Calu3 (cell line): ENCODE measurements at regions of chr4 and their contacts with region 1.

Region 1: DNA sequence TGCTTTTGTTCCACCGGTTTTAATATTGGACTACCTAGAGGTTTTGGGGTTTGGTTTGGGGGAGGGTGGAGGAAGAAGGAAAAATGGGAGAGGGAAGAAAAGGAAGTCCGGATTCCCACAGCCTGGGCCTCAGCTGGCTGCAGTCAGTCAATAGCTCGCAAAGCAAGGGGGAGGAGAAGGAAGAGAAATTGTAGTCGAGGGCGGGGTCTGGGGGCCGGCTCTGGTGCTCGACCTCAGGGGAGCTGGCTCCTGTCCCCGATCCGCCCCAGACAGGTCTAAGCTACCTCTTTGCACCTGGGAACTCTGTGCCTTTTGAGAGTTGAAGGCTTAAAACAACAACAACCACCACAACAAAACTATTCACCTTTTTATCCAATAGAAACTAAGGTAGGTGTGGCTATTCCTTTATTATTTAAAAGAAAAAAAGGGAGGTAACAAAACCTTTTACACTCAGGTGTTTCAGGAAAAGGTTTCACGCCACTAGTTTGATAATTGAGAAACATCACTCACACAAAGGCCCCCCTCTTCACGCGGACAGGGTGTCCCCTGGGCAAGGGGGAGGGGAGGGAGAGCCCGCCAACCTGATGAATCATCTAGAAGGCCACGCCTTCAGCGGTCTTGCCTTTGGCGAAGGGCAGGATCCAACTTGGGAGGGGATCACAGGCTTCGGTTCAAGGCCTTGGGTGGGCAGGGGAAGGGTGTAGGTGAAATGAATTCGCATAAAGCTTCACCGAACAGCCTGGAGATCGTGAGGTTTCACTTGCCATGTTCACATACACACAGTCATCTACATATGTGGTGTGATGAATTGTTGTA is 1.6 kb upstream of the LNX1 start:
- DNase-seq: peak; percentile 66
- H3K4me3 Mint-ChIP-seq: peak overlapping the region; percentile 72
- H3K27ac Mint-ChIP-seq: peak overlapping the region; percentile 73
- H3K4me1 Mint-ChIP-seq: peaks cover 39% of the 10 kb centered on the region
- H3K27me3 Mint-ChIP-seq: no peaks in the 10 kb centered on the region
- CTCF ChIP-seq: no peak

Region 2: DNA sequence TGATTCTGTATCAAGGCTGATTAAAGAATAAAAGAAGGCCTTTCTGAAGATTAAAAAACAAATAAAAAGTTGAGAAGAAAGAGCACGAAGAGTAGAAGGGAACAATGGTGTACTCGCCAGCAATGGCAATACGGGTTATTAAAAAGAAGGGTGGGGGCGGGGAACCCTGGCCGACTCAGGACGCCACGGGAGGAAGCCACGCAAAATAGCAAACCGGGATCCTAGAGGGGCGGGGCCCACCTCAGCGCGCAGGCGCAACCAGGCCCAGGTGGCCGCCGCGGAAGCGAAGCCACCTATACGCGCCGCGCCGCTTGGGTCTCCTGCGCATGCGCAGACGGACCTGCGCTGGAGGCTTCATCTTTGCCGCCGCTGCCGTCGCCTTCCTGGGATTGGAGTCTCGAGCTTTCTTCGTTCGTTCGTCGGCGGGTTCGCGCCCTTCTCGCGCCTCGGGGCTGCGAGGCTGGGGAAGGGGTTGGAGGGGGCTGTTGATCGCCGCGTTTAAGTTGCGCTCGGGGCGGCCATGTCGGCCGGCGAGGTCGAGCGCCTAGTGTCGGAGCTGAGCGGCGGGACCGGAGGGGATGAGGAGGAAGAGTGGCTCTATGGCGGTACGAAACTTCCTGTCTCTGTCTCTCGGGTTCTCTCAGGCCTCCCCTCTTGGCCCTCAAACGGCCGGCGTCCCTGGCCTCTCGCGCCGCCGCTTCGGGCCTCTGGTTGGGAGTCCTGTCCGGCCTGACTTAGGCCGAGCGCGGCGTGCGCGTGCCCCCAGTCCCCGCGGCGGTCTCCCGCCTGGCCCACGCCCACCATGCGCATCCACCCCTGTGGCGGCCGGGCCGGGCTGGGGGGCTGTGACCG is 215.3 kb before region 1 on chr4 and contains the start of gene FIP1L1:
- CTCF ChIA-PET with region 1: no interaction called
- intact Hi-C with region 1: loop called (anchors 5 kb)
- DNase-seq: peak; percentile 92
- H3K4me3 Mint-ChIP-seq: peak within 1 kb of the TSS; percentile 94
- H3K27ac Mint-ChIP-seq: peak within 1 kb of the TSS; percentile 88
- H3K4me1 Mint-ChIP-seq: peaks cover 13% of the 10 kb centered on the region
- H3K27me3 Mint-ChIP-seq: no peaks in the 10 kb centered on the region
- CTCF ChIP-seq: no peak
- total RNA-seq, gene FIP1L1: 45.7 and 56.3 TPM in 2 replicates

Region 3: DNA sequence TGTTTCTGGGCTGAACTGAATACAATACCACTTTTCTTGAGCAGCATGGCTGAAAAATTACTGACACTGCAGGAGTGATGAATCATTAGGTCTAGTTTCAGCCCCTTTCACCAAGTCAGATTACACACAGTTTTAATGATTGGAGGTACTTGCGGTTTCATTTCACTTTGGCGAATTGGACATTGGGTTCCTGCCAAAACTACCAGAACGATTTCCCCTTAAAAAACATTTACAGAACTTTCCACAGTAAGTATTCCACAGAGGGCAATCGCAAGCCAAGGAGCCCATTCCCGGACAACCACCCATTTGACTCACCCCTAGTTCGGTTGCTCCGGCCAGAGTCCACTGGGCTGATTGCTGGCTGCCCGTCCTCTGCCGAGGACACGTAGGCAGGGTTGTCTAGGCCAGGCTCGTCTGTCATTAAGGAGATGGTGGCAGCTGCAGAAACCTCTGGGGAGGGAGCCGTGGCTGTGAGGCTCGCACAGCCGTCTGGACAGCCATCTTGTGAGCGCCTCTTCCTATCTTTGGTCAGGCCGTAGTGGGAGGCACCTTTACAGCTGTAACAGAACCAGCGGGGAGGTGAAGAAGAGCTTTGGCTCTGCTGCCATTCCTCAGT is 85.1 kb before region 1 on chr4:
- CTCF ChIA-PET with region 1: no interaction called
- intact Hi-C with region 1: loop called (anchors 5 kb)
- DNase-seq: peak; percentile 37
- H3K4me3 Mint-ChIP-seq: peak overlapping the region; percentile 78
- H3K27ac Mint-ChIP-seq: peak overlapping the region; percentile 72
- H3K4me1 Mint-ChIP-seq: no peaks in the 10 kb centered on the region
- H3K27me3 Mint-ChIP-seq: no peaks in the 10 kb centered on the region
- CTCF ChIP-seq: no peak

Region 4: GRCh38 chr4:53573696-53574095 is 19.2 kb before region 1 on chr4:
- CTCF ChIA-PET with region 1: no interaction called
- intact Hi-C with region 1: no loop called
- DNase-seq: no peak
- H3K4me3 Mint-ChIP-seq: no peak overlapping the region
- H3K27ac Mint-ChIP-seq: no peak overlapping the region
- H3K4me1 Mint-ChIP-seq: peaks cover 9% of the 10 kb centered on the region
- H3K27me3 Mint-ChIP-seq: no peaks in the 10 kb centered on the region
- CTCF ChIP-seq: no peak

Region 5: DNA sequence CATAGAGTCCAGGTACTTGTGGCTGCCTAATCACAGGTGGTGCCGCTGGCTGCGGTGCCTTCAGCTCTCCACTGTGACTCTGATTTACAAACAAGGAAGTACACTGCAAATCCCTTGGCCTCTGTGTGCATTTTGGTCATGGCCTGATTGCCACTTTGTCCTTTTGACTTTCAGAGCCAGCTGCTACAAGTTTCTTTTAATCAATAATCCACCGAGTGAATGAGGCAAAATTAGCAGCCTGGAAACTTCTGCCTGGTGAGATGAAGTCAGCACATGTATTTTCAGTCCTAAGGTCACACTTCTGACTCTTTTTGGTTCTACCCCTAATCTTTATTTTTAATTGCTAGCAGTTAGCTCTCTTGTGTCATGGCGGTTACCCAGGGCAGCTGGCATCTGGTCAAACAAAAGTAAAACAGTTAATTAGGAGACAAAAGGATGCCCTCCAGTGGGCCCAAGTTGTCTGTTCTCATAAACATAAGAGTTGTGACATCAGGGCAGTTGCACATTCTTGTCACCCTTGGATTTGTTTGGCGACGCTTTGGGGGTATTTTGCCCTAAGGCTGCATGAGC is 60.7 kb after region 1 on chr4:
- CTCF ChIA-PET with region 1: interaction called, 3 read pairs
- intact Hi-C with region 1: loop called (anchors 5 kb)
- DNase-seq: peak; percentile 10
- H3K4me3 Mint-ChIP-seq: no peak overlapping the region
- H3K27ac Mint-ChIP-seq: no peak overlapping the region
- H3K4me1 Mint-ChIP-seq: peaks cover 27% of the 10 kb centered on the region
- H3K27me3 Mint-ChIP-seq: no peaks in the 10 kb centered on the region
- CTCF ChIP-seq: no peak